ENCODE measurements at regions of chr6 and their contacts with region 1.

Region 1: DNA sequence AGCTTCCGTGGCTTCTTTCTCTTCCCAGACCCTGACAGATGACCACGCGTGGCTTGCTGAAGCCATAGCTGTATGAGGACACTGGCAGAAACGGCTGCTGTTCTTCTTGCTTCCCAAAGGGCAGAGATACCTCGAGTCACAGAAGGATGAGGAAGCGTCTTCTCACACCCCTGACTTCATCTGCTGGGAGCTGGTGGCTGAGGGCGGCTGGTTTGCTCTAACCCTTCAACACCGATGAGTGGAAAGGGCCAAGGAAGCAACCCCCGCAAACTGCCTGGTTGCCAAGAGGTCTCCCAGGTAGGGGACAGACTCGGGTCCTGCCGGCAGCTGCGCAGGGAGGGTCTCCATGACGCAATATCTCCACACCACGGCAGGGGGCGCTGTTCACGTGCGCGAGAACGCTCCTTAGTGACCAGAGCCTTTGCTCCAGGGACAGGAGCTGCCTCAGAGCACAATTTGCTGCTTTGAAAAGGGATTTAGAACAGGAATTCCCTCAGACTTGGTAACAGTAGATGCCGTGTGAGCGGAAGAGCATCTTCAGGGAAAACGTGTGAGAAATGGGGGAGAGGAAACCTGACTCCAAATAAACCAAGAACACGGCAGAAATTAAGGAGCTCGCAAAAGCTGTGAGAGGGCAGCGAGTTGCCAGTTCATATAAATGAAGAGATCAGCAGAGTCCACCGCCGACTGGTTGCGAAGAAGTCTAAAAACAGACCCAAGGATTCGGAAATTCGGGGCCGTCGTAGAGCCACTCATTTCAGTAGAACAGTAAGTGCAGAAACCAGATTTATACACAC is 80.2 kb downstream of the ERMARD start:
- DNase-seq: peak; percentile 91
- ATAC-seq: peak; percentile 84
- H3K4me3 Mint-ChIP-seq: no peak overlapping the region
- H3K27ac Mint-ChIP-seq: no peak overlapping the region
- H3K4me1 Mint-ChIP-seq: peaks cover 42% of the 10 kb centered on the region
- H3K27me3 Mint-ChIP-seq: peaks cover 13% of the 10 kb centered on the region
- CTCF ChIP-seq: peak; percentile 97

Region 2: GRCh38 chr6:169800668-169801395 is 30.8 kb before region 1 on chr6:
- CTCF ChIA-PET with region 1: interaction called, 47 read pairs
- POLR2A ChIA-PET with region 1: no interaction called
- DNase-seq: no peak
- ATAC-seq: peak; percentile 51
- H3K4me3 Mint-ChIP-seq: no peak overlapping the region
- H3K27ac Mint-ChIP-seq: no peak overlapping the region
- H3K4me1 Mint-ChIP-seq: peaks cover 10% of the 10 kb centered on the region
- H3K27me3 Mint-ChIP-seq: peaks cover 23% of the 10 kb centered on the region
- CTCF ChIP-seq: no peak

Region 3: GRCh38 chr6:169820358-169820757 is 11.3 kb before region 1 on chr6:
- CTCF ChIA-PET with region 1: interaction called, 14 read pairs
- POLR2A ChIA-PET with region 1: no interaction called
- DNase-seq: no peak
- ATAC-seq: peak; percentile 57
- H3K4me3 Mint-ChIP-seq: no peak overlapping the region; the same call in 1 of the 2 replicates
- H3K27ac Mint-ChIP-seq: peak overlapping the region; percentile 89
- H3K4me1 Mint-ChIP-seq: peaks cover 40% of the 10 kb centered on the region
- H3K27me3 Mint-ChIP-seq: peaks cover 12% of the 10 kb centered on the region
- CTCF ChIP-seq: no peak

Region 4: GRCh38 chr6:169851641-169852503 is 20.2 kb after region 1 on chr6:
- CTCF ChIA-PET with region 1: interaction called, 46 read pairs
- POLR2A ChIA-PET with region 1: no interaction called
- DNase-seq: no peak
- ATAC-seq: peak; percentile 51
- H3K4me3 Mint-ChIP-seq: no peak overlapping the region
- H3K27ac Mint-ChIP-seq: peak overlapping the region; percentile 49; the same call in 1 of the 2 replicates
- H3K4me1 Mint-ChIP-seq: peaks cover 13% of the 10 kb centered on the region
- H3K27me3 Mint-ChIP-seq: no peaks in the 10 kb centered on the region
- CTCF ChIP-seq: no peak

Region 5: GRCh38 chr6:169933839-169934698 is 102.4 kb after region 1 on chr6:
- CTCF ChIA-PET with region 1: interaction called, 43 read pairs
- POLR2A ChIA-PET with region 1: no interaction called
- DNase-seq: no peak
- ATAC-seq: no peak
- H3K4me3 Mint-ChIP-seq: no peak overlapping the region
- H3K27ac Mint-ChIP-seq: no peak overlapping the region
- H3K4me1 Mint-ChIP-seq: peaks cover 40% of the 10 kb centered on the region
- H3K27me3 Mint-ChIP-seq: peaks cover 53% of the 10 kb centered on the region
- CTCF ChIP-seq: no peak

Region 6: DNA sequence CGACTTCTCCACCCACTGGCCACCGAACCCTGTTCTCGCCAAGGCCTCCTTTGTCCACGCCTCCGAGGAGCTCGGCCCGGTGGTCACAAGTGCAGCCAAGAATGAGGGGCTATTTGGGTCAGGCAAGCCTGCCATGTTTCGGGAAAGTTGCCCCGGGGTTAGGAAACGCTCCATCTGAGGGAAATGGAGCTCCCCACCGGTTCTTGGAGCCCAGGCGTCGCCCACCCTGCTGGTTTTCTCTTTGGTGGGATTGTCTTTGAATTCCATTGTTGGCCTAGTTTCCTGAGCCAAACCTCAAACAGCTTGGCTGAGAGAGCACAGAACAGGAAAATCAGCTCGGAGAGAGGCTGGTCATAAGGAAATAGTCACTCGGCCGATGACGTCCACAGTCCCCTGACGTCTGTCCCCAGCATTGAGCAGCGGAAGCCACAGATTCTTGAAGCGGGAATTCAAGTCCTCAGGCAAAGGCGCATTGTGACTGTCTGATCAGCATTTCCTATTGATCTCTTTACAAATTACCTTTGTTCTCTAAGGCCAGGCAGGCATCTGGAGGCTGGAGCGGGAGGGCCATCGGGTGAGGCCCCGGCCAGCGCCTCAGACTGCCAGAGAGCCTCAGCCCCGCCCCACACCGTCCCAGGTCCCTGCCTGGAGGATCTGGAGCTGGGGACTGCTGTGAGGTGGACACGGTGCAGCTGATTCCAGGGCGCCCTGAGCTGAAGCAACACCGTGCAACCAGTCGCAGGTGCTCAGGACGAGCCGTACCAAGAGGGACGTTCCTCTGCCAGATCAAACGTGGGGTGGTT is 320.7 kb after region 1 on chr6:
- CTCF ChIA-PET with region 1: interaction called, 13 read pairs
- POLR2A ChIA-PET with region 1: no interaction called
- DNase-seq: no peak
- ATAC-seq: peak; percentile 56
- H3K4me3 Mint-ChIP-seq: no peak overlapping the region
- H3K27ac Mint-ChIP-seq: no peak overlapping the region
- H3K4me1 Mint-ChIP-seq: peaks cover 36% of the 10 kb centered on the region
- H3K27me3 Mint-ChIP-seq: peaks cover 13% of the 10 kb centered on the region
- CTCF ChIP-seq: no peak

Region 7: GRCh38 chr6:170529839-170530469 is 698.3 kb after region 1 on chr6:
- CTCF ChIA-PET with region 1: interaction called, 17 read pairs
- POLR2A ChIA-PET with region 1: no interaction called
- DNase-seq: peak; percentile 78
- ATAC-seq: peak; percentile 91
- H3K4me3 Mint-ChIP-seq: no peak overlapping the region
- H3K27ac Mint-ChIP-seq: 0 out of 2 replicates have a peak overlapping the region, but pooled peaks have one; percentile 41
- H3K4me1 Mint-ChIP-seq: peaks cover 9% of the 10 kb centered on the region
- H3K27me3 Mint-ChIP-seq: no peaks in the 10 kb centered on the region
- CTCF ChIP-seq: peak; percentile 65